ENCODE measurements at regions of chr9 and their contacts with region 1.

Region 1: GRCh38 chr9:96232539-96233241 is 69.3 kb downstream of the HSD17B3 start:
- ATAC-seq: peak; percentile 51 to 98 (median 66)
- H3K4me3 ChIP-seq: no peak overlapping the region
- H3K27ac ChIP-seq: no peak overlapping the region
- H3K4me1 ChIP-seq: peaks cover 0 to 12% of the 10 kb centered on the region in 2 donors

Region 2: DNA sequence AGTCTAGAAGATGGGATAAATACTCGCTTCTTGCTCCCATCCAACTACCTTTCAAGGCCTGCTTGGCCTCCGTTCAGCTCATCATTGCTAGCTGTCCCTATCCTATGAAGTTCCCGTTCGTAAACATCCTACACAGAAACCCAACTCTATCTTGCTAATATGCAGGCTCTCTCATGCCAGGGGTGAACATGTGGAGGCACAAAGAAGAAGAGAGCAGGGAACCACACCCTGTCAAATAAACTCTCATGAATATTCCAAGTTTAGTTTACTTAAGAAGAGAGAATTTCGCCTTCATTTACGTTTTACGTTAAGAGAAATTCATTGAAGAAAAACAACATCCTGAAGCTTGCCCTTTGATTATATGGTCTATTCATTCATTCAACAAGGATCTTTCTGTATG is 77.2 kb after region 1 on chr9:
- in situ Hi-C with region 1: loop called in 1 of 9 experiments (anchors 5 kb)
- ATAC-seq: peak in 1 of 8 experiments; percentile 96
- H3K4me3 ChIP-seq: no peak overlapping the region
- H3K27ac ChIP-seq: no peak overlapping the region
- H3K4me1 ChIP-seq: no peaks in the 10 kb centered on the region

Region 3: DNA sequence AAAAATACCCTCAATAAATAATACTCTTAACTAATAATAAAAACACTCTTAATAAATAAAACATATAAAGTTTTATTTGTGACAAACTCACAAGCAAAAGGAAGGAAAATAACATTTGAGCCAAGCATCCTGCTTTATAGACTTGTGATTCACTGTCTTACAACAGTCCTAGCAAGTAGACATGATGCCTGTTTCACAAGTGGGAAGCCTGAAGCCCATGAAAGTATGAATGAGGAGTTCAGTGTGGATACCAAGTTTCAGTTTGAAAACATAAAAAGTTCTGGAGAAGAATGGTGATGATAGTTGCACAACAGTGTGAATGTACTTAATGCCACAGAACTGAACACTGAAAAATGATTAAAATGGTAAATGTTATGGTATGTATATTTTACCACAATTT is 228.2 kb after region 1 on chr9:
- in situ Hi-C with region 1: no loop called
- ATAC-seq: peak in 3 of 8 experiments; percentile 41 to 80 (median 72)
- H3K4me3 ChIP-seq: no peak overlapping the region
- H3K27ac ChIP-seq: no peak overlapping the region
- H3K4me1 ChIP-seq: no peaks in the 10 kb centered on the region

Region 4: DNA sequence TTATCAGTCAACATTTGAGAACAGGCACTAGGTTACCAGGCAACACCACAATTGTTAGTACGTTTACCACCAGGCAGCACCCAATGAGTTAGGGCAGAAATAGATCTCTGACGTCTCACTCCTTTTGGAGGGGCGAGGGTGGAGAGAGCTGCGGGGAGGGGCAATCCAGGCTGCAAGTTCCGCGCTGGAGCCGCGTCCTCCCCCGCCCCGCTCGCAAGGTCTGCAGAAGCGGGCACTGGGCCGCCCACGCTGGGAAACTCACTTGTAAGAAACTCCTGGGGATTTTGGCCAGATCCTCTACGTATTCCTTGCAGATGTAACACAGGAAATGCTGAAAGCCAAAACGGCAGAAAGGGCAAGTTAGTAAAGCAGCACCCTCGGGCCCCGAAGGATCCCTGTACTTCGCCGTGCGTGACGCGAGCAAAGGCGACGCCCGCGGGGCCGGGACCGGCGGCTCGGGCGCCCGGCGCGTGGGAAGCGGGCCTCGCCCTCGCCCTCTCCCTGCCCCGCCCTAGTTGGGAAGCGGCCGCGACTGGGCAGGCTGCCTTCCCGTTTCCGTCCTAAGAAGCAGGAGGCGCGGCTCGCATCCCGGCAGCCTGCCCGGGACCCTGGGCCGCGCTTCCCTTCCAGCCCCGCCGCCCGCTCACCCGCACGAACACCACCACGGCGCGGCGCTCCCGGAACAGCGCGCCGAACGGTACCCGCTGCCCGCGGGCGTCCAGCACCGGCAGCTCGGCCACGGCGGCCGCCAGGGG is 421.9 kb after region 1 on chr9:
- in situ Hi-C with region 1: loop called in 1 of 9 experiments (anchors 25 kb)
- ATAC-seq: peak; percentile 71 to 82 (median 78)
- H3K4me3 ChIP-seq: peak overlapping the region; percentile 50 to 71 (median 60)
- H3K27ac ChIP-seq: peak overlapping the region; percentile 68 to 80
- H3K4me1 ChIP-seq: no peaks in the 10 kb centered on the region

Measured in motor neuron (in vitro differentiated cells).